CD8-positive, alpha-beta T cell (primary cell): ENCODE measurements at regions of chr19 and their contacts with region 1.

Region 1: GRCh38 chr19:32674959-32675719 is at the start of gene ANKRD27:
- DNase-seq: peak; percentile 95 to 99 (median 98)
- ATAC-seq: peak; percentile 94
- H3K4me3 ChIP-seq: peak within 1 kb of the TSS; percentile 93 to 99
- H3K4me3 Mint-ChIP-seq: peak within 1 kb of the TSS; percentile 94
- H3K27ac ChIP-seq: peak within 1 kb of the TSS; percentile 70 to 82
- H3K27ac Mint-ChIP-seq: peak within 1 kb of the TSS; percentile 80
- H3K4me1 ChIP-seq: peaks cover 32% of the 10 kb centered on the region
- H3K4me1 Mint-ChIP-seq: peaks cover 44% of the 10 kb centered on the region
- H3K27me3 ChIP-seq: peaks cover 0 to 6% of the 10 kb centered on the region in 2 experiments
- H3K27me3 Mint-ChIP-seq: peaks cover 11% of the 10 kb centered on the region
- CTCF ChIP-seq: no peak
- total RNA-seq, gene ANKRD27: 15.2 to 16.0 TPM

Region 2: DNA sequence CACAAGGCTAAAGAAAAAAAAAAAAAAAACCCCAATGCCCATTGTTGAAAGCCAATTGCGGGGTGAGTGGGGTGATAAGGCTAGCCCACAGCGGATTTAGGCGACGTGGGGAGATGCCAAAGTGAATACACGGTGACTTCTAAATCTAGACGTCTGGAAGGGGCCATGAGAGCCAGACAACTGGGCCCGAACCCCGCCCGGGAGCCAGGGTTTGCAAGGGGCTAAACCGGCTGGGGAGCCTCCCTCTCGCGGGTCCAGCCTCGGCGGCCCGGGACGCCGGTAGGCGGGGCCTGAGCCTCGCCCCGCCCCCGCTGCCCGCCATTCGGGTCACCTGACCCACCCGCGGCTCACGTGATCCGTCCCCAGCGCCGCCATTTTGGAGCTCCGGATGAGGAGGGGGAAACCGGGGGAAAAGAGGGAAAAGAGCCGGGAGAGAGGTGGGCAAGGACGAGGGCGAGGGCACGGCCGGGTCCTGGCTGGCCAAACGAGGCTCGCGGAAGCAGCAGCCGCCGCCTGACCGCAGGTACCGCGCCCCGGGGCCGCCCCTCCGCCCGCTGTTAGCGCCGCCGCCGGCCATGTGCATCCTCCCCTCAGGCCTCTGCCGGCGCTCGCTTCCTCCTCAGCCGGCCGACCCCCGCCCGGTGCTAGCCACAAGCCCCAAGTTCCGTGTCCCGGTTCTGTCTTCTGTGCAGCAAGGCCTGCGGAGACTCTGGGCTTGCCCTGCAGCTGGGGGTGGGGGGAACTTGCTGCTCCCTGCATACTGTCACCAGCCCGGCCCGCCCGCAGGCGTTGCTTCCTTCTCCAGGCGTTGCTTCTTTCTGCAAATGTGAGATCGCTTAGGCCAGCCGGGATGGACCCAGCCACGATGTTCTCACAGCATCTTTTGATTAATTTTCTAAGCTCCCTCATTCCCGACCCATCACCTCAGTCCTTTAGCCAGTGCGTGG is 329.6 kb before region 1 on chr19 and contains the start of gene ZNF507:
- CTCF ChIA-PET with region 1: interaction called, 3 read pairs
- POLR2A ChIA-PET with region 1: no interaction called
- intact Hi-C with region 1: loop called (anchors 10 kb)
- DNase-seq: peak; percentile 58 to 88 (median 80)
- ATAC-seq: peak; percentile 78
- H3K4me3 ChIP-seq: peak within 1 kb of the TSS; percentile 69 to 91
- H3K4me3 Mint-ChIP-seq: peak within 1 kb of the TSS; percentile 95
- H3K27ac ChIP-seq: peak within 1 kb of the TSS; percentile 68 to 75
- H3K27ac Mint-ChIP-seq: peak within 1 kb of the TSS; percentile 97
- H3K4me1 ChIP-seq: peaks cover 39% of the 10 kb centered on the region
- H3K4me1 Mint-ChIP-seq: peaks cover 42% of the 10 kb centered on the region
- H3K27me3 ChIP-seq: no peaks in the 10 kb centered on the region
- H3K27me3 Mint-ChIP-seq: no peaks in the 10 kb centered on the region
- CTCF ChIP-seq: no peak
- total RNA-seq, gene ZNF507: 28.4 to 29.6 TPM

Region 3: GRCh38 chr19:32405431-32406161 is 269.5 kb before region 1 on chr19 and contains the start of gene DPY19L3:
- CTCF ChIA-PET with region 1: no interaction called
- POLR2A ChIA-PET with region 1: interaction called, 3 read pairs
- intact Hi-C with region 1: loop called in 1 of 2 experiments (anchors 10 kb)
- DNase-seq: peak; percentile 73 to 93 (median 89)
- ATAC-seq: peak; percentile 88
- H3K4me3 ChIP-seq: peak within 1 kb of the TSS; percentile 73 to 79
- H3K4me3 Mint-ChIP-seq: peak within 1 kb of the TSS; percentile 90
- H3K27ac ChIP-seq: peak within 1 kb of the TSS; percentile 87 to 91
- H3K27ac Mint-ChIP-seq: peak within 1 kb of the TSS; percentile 92
- H3K4me1 ChIP-seq: peaks cover 14% of the 10 kb centered on the region
- H3K4me1 Mint-ChIP-seq: peaks cover 22% of the 10 kb centered on the region
- H3K27me3 ChIP-seq: no peaks in the 10 kb centered on the region
- H3K27me3 Mint-ChIP-seq: no peaks in the 10 kb centered on the region
- CTCF ChIP-seq: no peak
- total RNA-seq, gene DPY19L3: 7.9 TPM

Region 4: DNA sequence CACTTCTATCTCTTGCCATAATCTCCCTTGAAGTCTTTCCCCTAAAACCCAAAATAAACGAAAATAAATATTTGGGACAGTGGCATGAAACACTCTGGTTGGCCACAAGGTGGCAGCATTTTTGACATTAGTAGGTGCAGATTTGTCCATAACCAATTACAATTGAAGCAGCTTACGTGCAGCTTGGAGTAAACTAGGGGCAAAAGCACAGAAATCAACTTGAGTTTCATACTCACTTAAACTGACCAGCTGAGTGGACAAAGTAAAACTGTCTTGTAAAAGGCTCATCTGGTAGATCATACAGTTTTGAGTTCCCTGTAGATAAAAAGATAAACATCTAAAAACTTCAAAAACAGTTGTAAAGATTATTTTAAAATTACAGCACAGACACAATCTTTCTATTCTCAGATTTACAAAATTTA is 75.4 kb before region 1 on chr19:
- CTCF ChIA-PET with region 1: interaction called, 3 read pairs
- POLR2A ChIA-PET with region 1: interaction called, 3 read pairs
- intact Hi-C with region 1: loop called (anchors 5 kb)
- DNase-seq: peak in 8 of 9 experiments; percentile 22 to 79 (median 54)
- ATAC-seq: peak; percentile 73
- H3K4me3 ChIP-seq: no peak overlapping the region
- H3K4me3 Mint-ChIP-seq: no peak overlapping the region
- H3K27ac ChIP-seq: no peak overlapping the region
- H3K27ac Mint-ChIP-seq: no peak overlapping the region
- H3K4me1 ChIP-seq: no peaks in the 10 kb centered on the region
- H3K4me1 Mint-ChIP-seq: peaks cover 6% of the 10 kb centered on the region
- H3K27me3 ChIP-seq: no peaks in the 10 kb centered on the region
- H3K27me3 Mint-ChIP-seq: no peaks in the 10 kb centered on the region
- CTCF ChIP-seq: peak; percentile 86

Region 5: GRCh38 chr19:32630338-32630737 is 44.8 kb before region 1 on chr19:
- CTCF ChIA-PET with region 1: no interaction called
- POLR2A ChIA-PET with region 1: no interaction called
- intact Hi-C with region 1: no loop called
- DNase-seq: no peak
- ATAC-seq: no peak
- H3K4me3 ChIP-seq: no peak overlapping the region
- H3K4me3 Mint-ChIP-seq: no peak overlapping the region
- H3K27ac ChIP-seq: no peak overlapping the region
- H3K27ac Mint-ChIP-seq: no peak overlapping the region
- H3K4me1 ChIP-seq: no peaks in the 10 kb centered on the region
- H3K4me1 Mint-ChIP-seq: no peaks in the 10 kb centered on the region
- H3K27me3 ChIP-seq: no peaks in the 10 kb centered on the region
- H3K27me3 Mint-ChIP-seq: no peaks in the 10 kb centered on the region
- CTCF ChIP-seq: no peak

Region 6: GRCh38 chr19:32642771-32643170 is 32.4 kb before region 1 on chr19:
- CTCF ChIA-PET with region 1: interaction called, 3 read pairs
- POLR2A ChIA-PET with region 1: no interaction called
- intact Hi-C with region 1: loop called in 1 of 2 experiments (anchors 1 kb)
- DNase-seq: peak; percentile 43 to 86 (median 66)
- ATAC-seq: peak; percentile 94
- H3K4me3 ChIP-seq: no peak overlapping the region
- H3K4me3 Mint-ChIP-seq: peak overlapping the region; percentile 5
- H3K27ac ChIP-seq: peak overlapping the region; percentile 5 to 45
- H3K27ac Mint-ChIP-seq: peak overlapping the region; percentile 58
- H3K4me1 ChIP-seq: peaks cover 26% of the 10 kb centered on the region
- H3K4me1 Mint-ChIP-seq: peaks cover 35% of the 10 kb centered on the region
- H3K27me3 ChIP-seq: no peaks in the 10 kb centered on the region
- H3K27me3 Mint-ChIP-seq: no peaks in the 10 kb centered on the region
- CTCF ChIP-seq: no peak

Region 7: DNA sequence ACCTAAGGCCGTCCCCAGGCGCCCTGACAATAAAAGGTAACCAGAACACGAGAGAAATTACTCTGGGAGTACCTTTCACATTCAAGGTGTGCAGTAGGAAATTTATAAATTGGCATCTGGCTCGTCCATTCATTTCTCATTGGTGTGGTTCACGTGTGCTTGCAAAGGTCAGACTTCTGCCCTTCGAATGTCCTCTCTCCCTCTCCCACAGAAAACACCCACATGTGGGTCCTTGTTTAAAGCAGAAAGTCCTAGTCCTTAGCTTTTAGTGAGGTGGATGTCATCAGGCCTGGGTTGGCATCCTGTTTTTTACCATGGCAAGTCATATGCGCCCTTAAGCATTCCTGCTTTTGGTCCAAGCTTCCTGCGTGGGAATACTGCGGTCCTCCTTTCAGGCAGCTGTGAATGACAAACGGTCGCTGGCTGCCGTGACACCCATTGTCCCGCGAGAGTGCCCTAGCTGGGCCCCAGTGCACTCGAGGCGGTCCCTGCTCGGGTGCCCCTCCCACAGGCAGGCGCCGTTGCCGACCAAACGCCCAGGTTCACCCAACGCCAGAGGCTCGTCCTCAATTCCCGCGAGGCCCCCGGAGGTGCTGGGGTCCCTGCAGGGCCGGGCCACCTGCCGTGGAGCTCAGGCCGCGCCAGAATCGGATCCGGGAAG is 16.3 kb after region 1 on chr19 and contains the start of gene NUDT19:
- CTCF ChIA-PET with region 1: interaction called, 5 read pairs
- POLR2A ChIA-PET with region 1: interaction called, 25 read pairs
- intact Hi-C with region 1: loop called (anchors 1 kb)
- DNase-seq: peak; percentile 53 to 85 (median 75)
- ATAC-seq: peak; percentile 79
- H3K4me3 ChIP-seq: peak within 1 kb of the TSS; percentile 60 to 79
- H3K4me3 Mint-ChIP-seq: peak within 1 kb of the TSS; percentile 92
- H3K27ac ChIP-seq: peak within 1 kb of the TSS; percentile 35 to 74
- H3K27ac Mint-ChIP-seq: peak within 1 kb of the TSS; percentile 90
- H3K4me1 ChIP-seq: peaks cover 35% of the 10 kb centered on the region
- H3K4me1 Mint-ChIP-seq: peaks cover 52% of the 10 kb centered on the region
- H3K27me3 ChIP-seq: no peaks in the 10 kb centered on the region
- H3K27me3 Mint-ChIP-seq: no peaks in the 10 kb centered on the region
- CTCF ChIP-seq: no peak
- total RNA-seq, gene NUDT19: 15.3 to 18.0 TPM

Region 8: DNA sequence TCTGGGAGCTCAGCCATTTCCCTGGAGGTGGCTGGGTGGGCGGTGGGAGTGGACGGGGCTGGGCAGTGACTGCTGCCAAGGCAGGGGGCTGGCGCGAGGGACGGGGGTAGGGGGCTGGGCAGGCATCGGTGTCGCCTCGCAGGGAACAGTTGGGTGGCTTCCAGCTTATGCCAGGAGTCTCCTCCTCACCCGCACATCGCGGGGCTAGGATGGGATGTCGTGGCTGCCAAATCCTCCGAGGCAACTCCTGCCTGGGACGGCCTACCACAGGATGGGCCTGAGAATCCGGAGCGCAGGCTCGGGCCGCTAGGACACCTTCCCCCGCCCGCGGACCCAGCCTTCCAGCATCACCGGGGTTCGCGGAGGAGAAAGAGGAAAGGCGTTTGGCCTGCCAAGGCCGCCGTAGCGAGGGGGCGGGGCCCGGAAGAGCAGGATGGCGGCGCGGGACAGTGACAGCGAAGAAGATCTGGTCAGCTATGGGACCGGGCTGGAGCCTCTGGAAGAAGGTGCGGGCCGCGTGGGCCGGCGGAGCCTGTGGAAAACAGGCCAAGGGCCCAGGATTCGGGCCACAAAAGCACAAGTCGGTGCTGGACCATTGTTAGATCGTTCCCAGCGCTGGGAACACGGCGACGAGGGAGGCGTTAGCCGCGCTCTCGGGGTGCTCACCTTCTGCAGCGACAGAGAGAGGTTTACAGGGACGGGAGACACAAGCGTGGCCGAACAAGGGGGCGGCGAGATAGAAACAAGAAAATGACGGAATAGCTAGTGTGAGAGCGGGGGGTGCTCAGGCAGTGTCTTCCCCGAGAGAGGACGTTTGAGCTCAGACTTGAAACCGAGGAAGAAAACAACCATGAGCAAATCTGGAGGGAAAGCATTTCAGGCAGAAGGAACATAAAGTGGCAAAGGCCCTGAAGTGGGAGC is 405.9 kb after region 1 on chr19 and contains the start of gene GPATCH1:
- CTCF ChIA-PET with region 1: no interaction called
- POLR2A ChIA-PET with region 1: no interaction called
- intact Hi-C with region 1: loop called in 1 of 2 experiments (anchors 5 kb)
- DNase-seq: peak; percentile 66 to 89 (median 81)
- ATAC-seq: peak; percentile 96
- H3K4me3 ChIP-seq: peak within 1 kb of the TSS; percentile 76 to 79
- H3K4me3 Mint-ChIP-seq: peak within 1 kb of the TSS; percentile 96
- H3K27ac ChIP-seq: peak within 1 kb of the TSS; percentile 62 to 80
- H3K27ac Mint-ChIP-seq: peak within 1 kb of the TSS; percentile 97
- H3K4me1 ChIP-seq: peaks cover 9% of the 10 kb centered on the region
- H3K4me1 Mint-ChIP-seq: peaks cover 30% of the 10 kb centered on the region
- H3K27me3 ChIP-seq: no peaks in the 10 kb centered on the region
- H3K27me3 Mint-ChIP-seq: no peaks in the 10 kb centered on the region
- CTCF ChIP-seq: no peak
- total RNA-seq, gene GPATCH1: 4.9 to 5.2 TPM